ENCODE measurements at regions of chr2 and their contacts with region 1.

Region 1: GRCh38 chr2:26685989-26686839 is 6.3 kb upstream of the KCNK3 start:
- DNase-seq: peak; percentile 29 to 40
- ATAC-seq: no peak
- H3K4me3 ChIP-seq: no peak overlapping the region
- H3K27ac ChIP-seq: no peak overlapping the region
- H3K4me1 ChIP-seq: no peaks in the 10 kb centered on the region
- H3K27me3 ChIP-seq: no peaks in the 10 kb centered on the region

Region 2: DNA sequence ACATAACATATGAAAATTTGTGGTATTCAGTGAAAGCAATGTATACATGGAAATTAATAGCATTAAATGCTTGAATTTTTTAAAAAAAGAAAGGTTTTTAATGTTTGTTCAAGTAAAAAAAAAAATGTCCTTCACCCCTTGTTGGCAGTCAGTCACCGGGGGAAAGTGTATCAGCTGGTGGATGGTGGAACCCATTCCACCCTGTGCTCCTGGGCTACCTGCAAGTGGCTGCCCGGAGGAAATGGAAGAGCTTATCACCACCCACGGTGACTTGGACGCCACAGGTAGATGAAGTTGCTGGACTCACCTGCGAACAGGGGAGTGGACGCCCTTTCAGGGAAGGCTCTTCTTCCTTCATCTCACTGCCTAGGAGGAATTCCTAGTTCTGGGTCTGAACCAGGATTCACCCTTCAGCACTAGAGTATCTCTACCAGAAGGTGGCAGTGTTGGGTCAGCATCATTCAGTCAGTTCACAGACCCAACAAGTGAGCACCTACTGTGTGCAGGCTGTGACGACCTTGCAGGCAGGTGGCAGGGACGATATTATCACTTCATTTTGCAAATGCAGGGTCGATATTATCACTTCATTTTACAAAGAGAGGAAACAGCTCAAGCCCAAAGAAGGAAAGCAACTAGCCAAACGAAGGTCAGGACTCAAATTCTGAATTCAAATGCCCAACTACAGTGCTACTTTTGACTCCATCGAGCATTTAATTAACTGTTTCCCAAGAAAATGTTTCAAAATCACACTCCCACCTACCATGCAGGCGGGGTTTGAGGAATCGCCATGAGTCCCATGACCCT is 80.8 kb before region 1 on chr2:
- intact Hi-C with region 1: loop called (anchors 5 kb)
- DNase-seq: no peak
- ATAC-seq: no peak
- H3K4me3 ChIP-seq: no peak overlapping the region
- H3K27ac ChIP-seq: no peak overlapping the region
- H3K4me1 ChIP-seq: no peaks in the 10 kb centered on the region
- H3K27me3 ChIP-seq: no peaks in the 10 kb centered on the region

Region 3: DNA sequence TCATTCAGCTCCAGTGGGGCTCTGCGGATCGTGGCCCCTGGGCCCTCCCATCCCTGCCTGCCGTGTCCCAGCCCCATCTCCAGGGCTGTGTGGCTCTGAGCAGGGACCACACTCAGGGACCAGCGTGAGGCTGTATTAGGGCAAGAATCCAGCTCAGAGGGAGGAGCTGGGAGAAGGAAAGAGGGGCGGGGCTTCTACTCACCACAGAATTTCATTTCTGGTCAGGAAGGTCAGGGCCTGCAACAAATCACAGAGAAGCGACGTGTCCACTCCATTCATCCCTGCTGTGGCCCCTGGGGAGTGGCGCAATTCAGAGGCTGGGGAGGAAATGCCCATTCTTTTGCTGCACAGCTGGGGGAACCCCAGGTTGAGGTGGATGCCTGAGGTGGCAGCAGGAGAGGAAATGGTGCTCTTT is 45.9 kb before region 1 on chr2:
- intact Hi-C with region 1: no loop called
- DNase-seq: no peak
- ATAC-seq: no peak
- H3K4me3 ChIP-seq: no peak overlapping the region
- H3K27ac ChIP-seq: no peak overlapping the region
- H3K4me1 ChIP-seq: no peaks in the 10 kb centered on the region
- H3K27me3 ChIP-seq: no peaks in the 10 kb centered on the region

Region 4: GRCh38 chr2:26720322-26721166 is 34.3 kb after region 1 on chr2:
- intact Hi-C with region 1: loop called (anchors 1 to 5 kb)
- DNase-seq: peak; percentile 92 to 97
- ATAC-seq: peak; percentile 82
- H3K4me3 ChIP-seq: no peak overlapping the region
- H3K27ac ChIP-seq: peak overlapping the region in 1 of 2 donors; percentile 32
- H3K4me1 ChIP-seq: no peaks in the 10 kb centered on the region
- H3K27me3 ChIP-seq: no peaks in the 10 kb centered on the region